PC-9 (cell line): ENCODE measurements at regions of chr19 and their contacts with region 1.

Region 1: DNA sequence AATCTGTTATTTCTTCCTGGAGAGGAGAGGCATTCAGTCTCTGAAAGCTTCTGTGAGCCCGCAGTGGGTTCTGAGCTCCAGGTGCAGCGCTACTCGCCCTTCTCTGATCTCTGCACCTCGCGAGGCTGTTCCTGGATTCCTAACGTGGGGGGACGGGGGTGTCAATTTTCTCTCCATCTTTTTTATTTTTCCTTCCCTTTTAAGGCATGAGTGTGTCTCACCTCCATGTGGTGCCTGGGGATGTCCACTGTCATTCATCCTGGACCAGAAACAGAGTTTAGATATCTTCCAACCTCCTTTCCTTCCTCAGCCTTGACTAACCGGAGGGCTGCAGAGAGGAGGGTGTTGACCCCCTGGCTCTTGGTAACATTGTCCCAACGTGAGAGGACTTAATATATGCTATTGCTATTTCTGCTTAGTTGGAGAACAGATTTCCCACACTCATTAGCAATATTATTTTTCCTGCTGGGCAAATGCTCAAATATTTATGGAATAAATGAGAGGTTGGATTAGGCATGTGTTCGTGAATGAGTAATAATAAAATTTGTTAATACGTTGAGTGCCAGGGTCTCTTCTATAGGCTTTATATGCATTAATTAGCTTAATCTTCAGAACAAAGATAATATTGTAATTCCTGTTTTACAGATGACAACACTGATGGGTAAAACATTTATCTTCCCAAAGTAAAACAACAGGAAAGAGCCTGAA is 831 bp downstream of the ZNF233 start:
- DNase-seq: no peak
- H3K4me3 ChIP-seq: peak overlapping the region; percentile 50
- H3K27ac ChIP-seq: no peak overlapping the region
- H3K4me1 ChIP-seq: peaks cover 10% of the 10 kb centered on the region; the same call in 1 of the 2 replicates
- H3K27me3 ChIP-seq: no peaks in the 10 kb centered on the region
- CTCF ChIP-seq: no peak

Region 2: DNA sequence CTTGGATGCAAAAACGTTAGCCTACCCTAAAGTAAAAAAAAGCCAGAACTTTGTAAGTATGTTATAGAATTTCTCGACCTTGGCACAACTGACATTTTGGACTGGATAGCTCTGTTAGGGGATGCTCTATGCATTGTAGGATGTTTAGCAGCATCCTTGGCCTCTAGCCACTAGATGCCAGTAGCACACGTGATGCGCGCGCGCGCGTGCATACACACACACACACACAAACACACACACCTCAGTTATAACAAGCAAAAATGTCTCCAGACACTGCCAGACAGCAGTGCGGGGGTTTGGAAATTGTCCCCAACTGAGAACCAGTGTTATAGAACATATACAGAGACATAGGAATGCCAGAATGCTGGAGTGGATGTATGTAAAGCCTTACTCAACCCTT is 78.4 kb before region 1 on chr19:
- CTCF ChIA-PET with region 1: no interaction called
- POLR2A ChIA-PET with region 1: no interaction called
- intact Hi-C with region 1: no loop called
- DNase-seq: no peak
- H3K4me3 ChIP-seq: no peak overlapping the region
- H3K27ac ChIP-seq: no peak overlapping the region
- H3K4me1 ChIP-seq: no peaks in the 10 kb centered on the region
- H3K27me3 ChIP-seq: 0 out of 2 replicates have a peak, but pooled peaks cover 3% of the 10 kb centered on the region
- CTCF ChIP-seq: no peak

Region 3: DNA sequence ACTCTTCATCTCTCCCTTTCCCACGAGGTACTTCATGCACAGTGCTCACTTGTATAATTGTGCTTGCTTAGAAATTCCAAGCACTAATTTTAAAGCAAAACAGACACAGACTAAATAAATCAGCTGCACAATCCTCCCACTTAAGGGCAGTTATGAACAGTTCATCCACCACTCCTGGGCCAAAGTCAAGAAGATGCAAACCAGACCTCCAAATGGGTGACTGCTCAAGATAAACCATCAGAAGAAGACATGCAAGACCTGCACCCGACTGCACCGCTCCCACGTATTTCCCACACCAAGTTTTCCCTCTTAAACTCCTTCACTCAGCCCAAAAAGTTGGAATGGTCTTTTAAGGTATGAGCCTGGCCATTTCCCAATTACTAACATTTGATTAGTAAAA is 24.5 kb after region 1 on chr19:
- CTCF ChIA-PET with region 1: no interaction called
- POLR2A ChIA-PET with region 1: interaction called, 3 read pairs
- intact Hi-C with region 1: loop called (anchors 1 kb)
- DNase-seq: no peak
- H3K4me3 ChIP-seq: no peak overlapping the region
- H3K27ac ChIP-seq: no peak overlapping the region
- H3K4me1 ChIP-seq: 0 out of 2 replicates have a peak, but pooled peaks cover 8% of the 10 kb centered on the region
- H3K27me3 ChIP-seq: no peaks in the 10 kb centered on the region
- CTCF ChIP-seq: no peak